ENCODE measurements at regions of chr19 and their contacts with region 1.

Region 1: DNA sequence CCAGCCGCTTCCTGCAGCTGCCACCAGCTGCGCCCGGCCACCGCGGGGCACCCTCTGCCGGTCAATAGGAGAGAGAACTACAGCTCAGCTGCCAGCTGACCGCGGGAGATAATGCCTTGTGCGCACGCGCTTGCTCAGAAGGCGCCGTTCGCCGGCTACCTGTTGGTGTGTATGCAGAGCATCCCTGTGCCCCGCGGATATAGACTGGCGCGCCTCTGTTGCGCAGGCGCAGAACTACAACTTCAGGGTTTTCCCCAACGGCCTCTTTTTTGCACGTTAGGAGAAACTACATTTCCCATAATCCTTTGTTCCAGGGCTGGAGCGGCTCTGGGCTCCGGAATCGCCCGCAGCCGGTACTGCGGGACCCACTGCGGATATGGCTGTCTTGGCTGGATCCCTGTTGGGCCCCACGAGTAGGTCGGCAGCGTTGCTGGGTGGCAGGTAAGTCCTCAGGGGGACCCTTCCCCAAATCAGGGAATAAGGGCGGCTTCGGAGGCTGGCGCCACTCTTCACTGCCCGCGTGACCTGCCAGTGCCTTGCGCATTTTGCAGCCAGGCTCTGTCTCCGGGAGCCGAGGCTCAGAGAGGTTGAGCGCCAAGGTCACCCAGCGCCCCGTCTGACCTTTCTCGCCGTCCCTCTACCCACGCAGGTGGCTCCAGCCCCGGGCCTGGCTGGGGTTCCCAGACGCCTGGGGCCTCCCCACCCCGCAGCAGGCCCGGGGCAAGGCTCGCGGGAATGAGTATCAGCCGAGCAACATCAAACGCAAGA is at the start of gene MRPL34:
- DNase-seq: peak; percentile 94 to 98 (median 97)
- H3K4me3 ChIP-seq: peak within 1 kb of the TSS; percentile 85 to 90
- H3K4me3 Mint-ChIP-seq: peak within 1 kb of the TSS; percentile 90 to 94 (median 92)
- H3K27ac ChIP-seq: peak within 1 kb of the TSS; percentile 85
- H3K27ac Mint-ChIP-seq: peak within 1 kb of the TSS; percentile 69 to 96 (median 89)
- H3K4me1 ChIP-seq: peaks cover 57% of the 10 kb centered on the region
- H3K4me1 Mint-ChIP-seq: peaks cover 26 to 73% (median 49%) of the 10 kb centered on the region in 4 donors
- H3K27me3 ChIP-seq: no peaks in the 10 kb centered on the region
- H3K27me3 Mint-ChIP-seq: no peaks in the 10 kb centered on the region
- total RNA-seq, gene MRPL34: 69.4 to 74.1 TPM

Region 2: DNA sequence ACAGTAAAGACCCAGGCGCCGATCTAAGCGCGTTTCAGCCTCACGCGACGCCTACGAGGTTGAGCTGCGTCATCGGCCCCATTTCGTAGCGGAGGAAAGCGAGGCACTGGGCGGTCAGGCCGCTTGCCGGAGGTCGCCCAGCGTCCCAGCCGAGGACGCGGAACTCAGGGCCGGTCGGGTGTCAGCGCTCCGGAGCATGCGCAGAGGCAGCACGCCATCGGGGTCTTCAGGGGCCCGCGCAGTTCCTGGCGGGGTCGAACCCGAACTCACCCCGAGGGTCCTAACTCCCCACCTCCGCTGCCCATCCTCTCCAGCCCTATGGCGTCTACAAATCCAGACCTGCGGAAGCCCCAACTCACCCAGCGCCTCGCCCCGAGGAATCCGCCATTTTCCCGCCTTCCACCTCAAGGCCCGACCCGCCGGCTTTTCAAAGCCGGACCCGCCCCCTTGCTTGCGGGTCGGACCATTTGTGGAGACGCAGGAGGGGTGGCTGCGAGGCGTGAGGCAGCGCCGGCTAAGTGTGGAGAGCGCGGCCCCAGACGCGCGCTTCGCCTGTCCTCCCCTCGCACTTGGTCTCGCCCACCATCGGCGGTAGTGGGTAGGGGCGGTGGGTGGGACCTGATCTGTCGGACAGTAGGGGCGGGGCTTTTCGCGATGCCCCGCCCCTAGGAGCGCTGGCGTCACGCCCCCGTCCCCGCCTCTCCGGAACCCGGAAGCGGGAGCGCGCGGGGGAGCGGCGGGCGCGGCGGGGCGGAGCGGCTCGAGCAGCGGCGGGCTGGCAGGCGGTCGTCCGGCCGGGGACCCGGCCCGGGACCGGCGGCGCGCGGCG is 230.5 kb before region 1 on chr19 and contains the starts of genes HAUS8 and MYO9B:
- CTCF ChIA-PET with region 1: interaction called, 4 read pairs
- POLR2A ChIA-PET with region 1: interaction called, 11 read pairs
- intact Hi-C with region 1: no loop called
- DNase-seq: peak; percentile 99 to 100 (median 100)
- H3K4me3 ChIP-seq: peak within 1 kb of the TSS; percentile 91 to 93
- H3K4me3 Mint-ChIP-seq: peak within 1 kb of the TSS; percentile 96 to 100 (median 98)
- H3K27ac ChIP-seq: peak within 1 kb of the TSS; percentile 77
- H3K27ac Mint-ChIP-seq: peak within 1 kb of the TSS; percentile 89 to 99 (median 98)
- H3K4me1 ChIP-seq: peaks cover 56% of the 10 kb centered on the region
- H3K4me1 Mint-ChIP-seq: peaks cover 41 to 79% (median 53%) of the 10 kb centered on the region in 4 donors
- H3K27me3 ChIP-seq: no peaks in the 10 kb centered on the region
- H3K27me3 Mint-ChIP-seq: no peaks in the 10 kb centered on the region
- total RNA-seq, gene HAUS8: 20.0 to 20.9 TPM
- total RNA-seq, gene MYO9B: 176 to 181 TPM

Region 3: DNA sequence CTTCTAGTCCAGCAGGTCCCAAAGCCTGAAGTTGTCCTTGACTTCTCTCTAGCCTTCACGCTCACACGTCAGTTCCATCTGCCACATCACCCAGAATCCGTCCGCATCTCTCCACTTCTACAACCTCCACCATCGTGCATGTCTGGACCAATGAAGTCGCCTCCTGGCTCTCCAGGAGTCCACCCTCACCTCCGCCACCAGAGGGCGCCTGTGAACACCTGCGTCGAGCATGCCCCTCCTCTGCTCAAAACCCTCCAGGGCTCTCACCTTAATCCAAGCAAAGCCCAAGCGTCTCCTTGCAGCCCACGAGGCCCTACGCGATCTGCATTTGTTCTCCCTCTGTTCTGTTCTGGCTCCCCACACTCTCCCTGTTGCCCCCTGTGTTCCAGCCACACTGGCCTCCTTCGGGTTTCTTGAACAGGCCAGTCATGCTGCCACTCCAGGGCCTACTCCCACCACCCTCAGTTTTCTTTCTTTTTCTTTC is 44.8 kb before region 1 on chr19:
- CTCF ChIA-PET with region 1: interaction called, 10 read pairs
- POLR2A ChIA-PET with region 1: no interaction called
- intact Hi-C with region 1: no loop called
- DNase-seq: peak; percentile 85 to 88 (median 87)
- H3K4me3 ChIP-seq: no peak overlapping the region
- H3K4me3 Mint-ChIP-seq: no peak overlapping the region
- H3K27ac ChIP-seq: no peak overlapping the region
- H3K27ac Mint-ChIP-seq: peak overlapping the region in 5 of 7 donors; percentile 1 to 82 (median 47)
- H3K4me1 ChIP-seq: peaks cover 14% of the 10 kb centered on the region
- H3K4me1 Mint-ChIP-seq: peaks cover 5 to 22% (median 16%) of the 10 kb centered on the region in 4 donors
- H3K27me3 ChIP-seq: no peaks in the 10 kb centered on the region
- H3K27me3 Mint-ChIP-seq: no peaks in the 10 kb centered on the region

Region 4: GRCh38 chr19:17327651-17328516 is 22.2 kb after region 1 on chr19:
- CTCF ChIA-PET with region 1: interaction called, 10 read pairs
- POLR2A ChIA-PET with region 1: interaction called, 64 read pairs
- intact Hi-C with region 1: loop called (anchors 1 kb)
- DNase-seq: peak; percentile 39 to 69 (median 54)
- H3K4me3 ChIP-seq: peak overlapping the region in 1 of 2 donors; percentile 29
- H3K4me3 Mint-ChIP-seq: peak overlapping the region; percentile 74 to 87 (median 82)
- H3K27ac ChIP-seq: peak overlapping the region; percentile 67
- H3K27ac Mint-ChIP-seq: peak overlapping the region in 6 of 7 donors; percentile 27 to 91 (median 66)
- H3K4me1 ChIP-seq: peaks cover 16% of the 10 kb centered on the region
- H3K4me1 Mint-ChIP-seq: peaks cover 0 to 23% (median 13%) of the 10 kb centered on the region in 4 donors
- H3K27me3 ChIP-seq: no peaks in the 10 kb centered on the region
- H3K27me3 Mint-ChIP-seq: no peaks in the 10 kb centered on the region

Region 5: DNA sequence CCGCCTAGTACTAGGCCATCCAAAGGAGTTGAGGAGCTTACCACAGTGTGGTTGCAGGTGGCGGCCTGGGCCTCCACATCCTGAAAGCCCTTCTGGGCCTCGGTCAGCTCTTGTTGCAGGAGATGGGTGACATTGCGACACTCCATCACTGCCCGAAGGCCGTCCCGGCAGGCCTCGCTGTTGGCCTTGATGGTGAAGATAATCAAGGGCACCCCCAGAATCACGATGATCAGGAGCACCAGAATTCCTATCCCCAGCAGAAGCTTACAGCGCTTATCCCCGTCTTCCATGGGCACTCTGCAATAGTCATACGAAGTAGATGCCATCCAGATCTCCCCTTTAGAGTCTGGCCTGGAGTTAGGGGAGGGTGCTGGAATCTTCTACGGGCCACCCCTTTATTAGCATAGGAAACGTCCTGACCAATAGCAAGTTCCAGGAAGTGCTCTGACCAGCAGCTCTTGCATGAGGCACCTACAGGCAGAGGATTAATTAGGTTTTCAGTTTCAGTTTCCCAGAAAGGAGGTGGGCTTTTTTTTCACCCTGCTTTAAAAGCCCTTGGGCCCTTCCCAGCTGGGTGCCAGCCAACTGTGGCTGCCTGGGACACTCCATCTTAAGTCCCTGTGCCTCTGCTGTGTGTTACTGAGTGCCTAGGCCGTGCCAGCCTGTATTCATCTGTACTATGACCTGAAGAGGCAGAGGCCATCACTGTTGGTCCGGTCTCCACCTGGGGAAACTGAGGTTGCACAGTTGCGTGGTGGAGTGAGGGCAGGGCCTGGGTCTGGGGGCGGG is 99.7 kb after region 1 on chr19 and contains the start of gene BST2:
- CTCF ChIA-PET with region 1: interaction called, 3 read pairs
- POLR2A ChIA-PET with region 1: no interaction called
- intact Hi-C with region 1: loop called (anchors 5 kb)
- DNase-seq: peak; percentile 60 to 80 (median 65)
- H3K4me3 ChIP-seq: peak within 1 kb of the TSS; percentile 93 to 98
- H3K4me3 Mint-ChIP-seq: peak within 1 kb of the TSS; percentile 94 to 98 (median 94)
- H3K27ac ChIP-seq: peak within 1 kb of the TSS; percentile 88
- H3K27ac Mint-ChIP-seq: peak within 1 kb of the TSS; percentile 93 to 96 (median 94)
- H3K4me1 ChIP-seq: peaks cover 32% of the 10 kb centered on the region
- H3K4me1 Mint-ChIP-seq: peaks cover 20 to 45% (median 29%) of the 10 kb centered on the region in 4 donors
- H3K27me3 ChIP-seq: no peaks in the 10 kb centered on the region
- H3K27me3 Mint-ChIP-seq: no peaks in the 10 kb centered on the region
- total RNA-seq, gene BST2: 55.9 TPM

Measured in CD4-positive, alpha-beta memory T cell (primary cell).